Ascending aorta (tissue), 2 donors: ENCODE measurements at regions of chr4 and their contacts with region 1.

Region 1: GRCh38 chr4:187478292-187479140 is 517.1 kb upstream of the ZFP42 start:
- DNase-seq: peak in 1 of 2 donors; percentile 74
- H3K4me3 ChIP-seq: peak overlapping the region in 1 of 2 donors; percentile 23
- H3K27ac ChIP-seq: peak overlapping the region; percentile 60 to 81
- H3K4me1 ChIP-seq: peaks cover 15 to 42% of the 10 kb centered on the region in 2 donors
- H3K27me3 ChIP-seq: no peaks in the 10 kb centered on the region
- CTCF ChIP-seq: no peak

Region 2: GRCh38 chr4:186845137-186845842 is 633.2 kb before region 1 on chr4:
- intact Hi-C with region 1: loop called (anchors 5 kb)
- DNase-seq: peak in 1 of 2 donors; percentile 14
- H3K4me3 ChIP-seq: peak overlapping the region in 1 of 2 donors; percentile 55
- H3K27ac ChIP-seq: peak overlapping the region; percentile 79 to 82
- H3K4me1 ChIP-seq: peaks cover 0 to 18% of the 10 kb centered on the region in 2 donors
- H3K27me3 ChIP-seq: no peaks in the 10 kb centered on the region
- CTCF ChIP-seq: no peak